Activated CD8-positive, alpha-beta T cell treated with anti-CD3 and anti-CD28 coated beads for 36 hours (primary cell): ENCODE measurements at regions of chr10 and their contacts with region 1.

Region 1: DNA sequence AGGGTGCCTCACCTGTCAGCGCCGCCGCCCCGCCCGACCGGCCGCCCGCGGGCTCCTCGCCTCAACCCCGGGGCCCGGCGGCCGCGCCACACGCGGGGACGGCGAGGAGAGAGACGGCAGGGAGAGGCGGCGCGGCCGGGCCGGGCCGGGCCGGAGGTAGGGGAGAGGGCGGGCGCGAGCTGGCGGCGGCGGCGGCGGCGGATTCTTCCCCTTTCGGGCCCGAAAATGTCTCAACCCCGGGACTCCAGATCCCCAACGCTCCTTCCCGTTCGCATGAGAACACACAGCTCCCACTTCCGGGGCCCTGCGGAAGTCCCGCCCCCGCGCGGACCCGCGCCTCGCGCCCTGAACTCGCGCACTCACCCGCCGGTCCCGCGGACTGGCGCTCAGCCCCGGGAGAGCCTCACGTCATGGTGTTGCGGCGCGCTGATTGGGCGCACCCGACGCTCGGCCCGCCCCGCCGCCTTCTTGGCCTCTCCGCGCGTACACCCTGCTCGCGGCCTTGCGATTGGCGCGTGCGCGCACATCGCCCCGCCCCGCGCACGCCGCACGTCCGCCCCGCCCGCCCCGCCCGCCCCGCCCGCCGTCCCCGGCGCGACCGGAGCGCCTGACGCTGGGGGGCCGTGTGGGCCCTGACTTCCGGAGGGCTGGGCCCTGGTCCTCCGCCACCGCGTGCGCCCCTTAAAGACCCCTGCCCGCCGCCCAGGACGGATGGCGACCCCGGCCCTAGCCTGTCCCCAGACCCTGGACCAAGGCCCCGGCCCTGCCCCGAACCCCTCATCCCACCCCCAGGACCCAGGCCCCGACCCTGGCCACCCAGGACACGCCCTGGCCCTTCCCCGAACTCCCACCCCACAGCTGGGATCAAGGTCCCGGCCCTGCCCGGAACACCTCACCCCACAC is at the start of gene LARP4B:
- DNase-seq: peak; percentile 96
- ATAC-seq: peak; percentile 99
- H3K4me3 Mint-ChIP-seq: peak within 1 kb of the TSS; percentile 91
- H3K27ac Mint-ChIP-seq: peak within 1 kb of the TSS; percentile 93
- H3K4me1 Mint-ChIP-seq: peaks cover 32% of the 10 kb centered on the region
- H3K27me3 Mint-ChIP-seq: no peaks in the 10 kb centered on the region
- CTCF ChIP-seq: no peak
- total RNA-seq, gene LARP4B: 101 to 104 TPM

Region 2: GRCh38 chr10:659688-660141 is 272.0 kb before region 1 on chr10:
- CTCF ChIA-PET with region 1: no interaction called
- POLR2A ChIA-PET with region 1: no interaction called
- intact Hi-C with region 1: no loop called
- DNase-seq: no peak
- ATAC-seq: no peak
- H3K4me3 Mint-ChIP-seq: no peak overlapping the region
- H3K27ac Mint-ChIP-seq: no peak overlapping the region
- H3K4me1 Mint-ChIP-seq: peaks cover 3% of the 10 kb centered on the region
- H3K27me3 Mint-ChIP-seq: peaks cover 4% of the 10 kb centered on the region
- CTCF ChIP-seq: no peak

Region 3: DNA sequence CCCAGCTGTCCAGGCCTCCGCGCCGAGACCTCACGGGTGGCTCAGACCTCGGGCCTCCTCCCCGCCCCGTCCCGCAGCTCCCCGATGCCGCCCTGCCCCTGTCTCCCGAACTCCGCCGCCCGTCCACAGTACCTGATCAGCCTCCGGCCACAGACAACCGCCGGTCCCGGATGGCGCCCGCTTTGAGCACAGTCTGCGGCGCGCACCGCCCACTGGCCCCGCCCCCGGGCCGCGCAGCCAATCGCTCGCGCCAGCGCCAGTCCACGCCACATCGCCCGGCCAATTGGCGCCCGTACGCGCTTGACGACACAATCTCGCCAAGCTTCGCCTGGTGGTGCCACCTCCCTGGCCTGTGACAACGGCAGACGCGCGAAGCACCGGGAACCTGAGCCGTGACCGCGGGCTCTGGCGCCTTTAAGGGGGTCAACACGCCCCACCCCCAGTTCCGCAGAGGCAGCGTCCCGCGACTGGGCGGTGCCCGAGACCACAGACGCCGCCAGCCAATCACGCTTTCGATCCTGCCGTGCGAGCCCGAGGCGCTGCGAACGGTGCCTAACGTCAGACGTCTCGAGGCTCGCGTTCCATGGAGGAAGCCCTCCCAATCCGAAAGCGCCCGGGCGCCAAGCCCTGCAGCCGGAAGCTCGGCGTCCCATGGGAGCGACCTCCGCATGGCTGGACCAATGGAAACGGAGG is 117.2 kb after region 1 on chr10 and contains the start of gene IDI1:
- CTCF ChIA-PET with region 1: interaction called, 3 read pairs
- POLR2A ChIA-PET with region 1: interaction called, 7 read pairs
- intact Hi-C with region 1: loop called (anchors 5 kb)
- DNase-seq: peak; percentile 98
- ATAC-seq: peak; percentile 87
- H3K4me3 Mint-ChIP-seq: peak within 1 kb of the TSS; percentile 98
- H3K27ac Mint-ChIP-seq: peak within 1 kb of the TSS; percentile 96
- H3K4me1 Mint-ChIP-seq: peaks cover 64% of the 10 kb centered on the region
- H3K27me3 Mint-ChIP-seq: no peaks in the 10 kb centered on the region
- CTCF ChIP-seq: no peak
- total RNA-seq, gene IDI1: 67.7 to 69.5 TPM

Region 4: DNA sequence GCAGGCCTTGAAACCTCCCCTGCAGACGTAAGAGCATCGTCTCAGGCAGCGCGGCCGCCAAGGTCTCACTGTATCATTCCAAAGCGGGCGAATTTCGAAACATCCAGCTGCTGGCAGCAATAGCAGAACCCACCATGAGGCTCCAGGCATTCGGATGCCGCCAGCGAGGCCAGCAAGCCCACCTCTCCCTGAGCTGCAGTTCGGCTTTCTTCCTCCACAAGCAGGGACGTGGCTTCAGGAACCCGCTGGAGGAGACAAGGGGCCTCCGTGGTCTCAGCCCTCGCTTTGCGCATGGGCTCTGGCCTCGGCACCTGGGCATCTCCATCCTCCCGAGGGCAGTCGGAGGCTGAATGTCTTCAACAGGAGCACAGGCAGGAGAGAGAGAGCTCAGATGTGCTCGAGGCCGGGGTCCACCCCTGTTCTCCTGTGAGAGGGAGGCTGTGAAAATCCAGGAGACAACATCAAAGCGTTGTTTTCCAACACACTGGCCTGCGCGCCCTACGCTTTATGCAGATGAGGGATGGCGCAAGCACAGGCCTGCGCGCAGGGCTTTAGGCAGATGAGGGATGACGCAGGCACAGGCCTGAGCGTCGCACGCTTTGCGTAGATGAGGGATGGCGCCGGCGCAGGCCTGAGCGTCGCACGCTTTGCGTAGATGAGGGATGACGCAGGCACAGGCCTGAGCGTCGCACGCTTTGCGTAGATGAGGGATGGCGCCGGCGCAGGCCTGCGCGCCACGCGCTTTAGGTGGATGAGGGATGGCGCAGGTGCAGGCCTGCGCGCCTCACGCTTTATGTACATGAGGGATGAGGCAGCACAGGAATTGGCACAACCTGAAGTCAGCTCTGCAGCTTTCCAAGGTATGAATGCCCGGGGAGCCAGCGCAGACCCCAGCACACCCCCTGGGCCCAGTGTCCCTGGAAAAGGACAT is 227.7 kb after region 1 on chr10:
- CTCF ChIA-PET with region 1: no interaction called
- POLR2A ChIA-PET with region 1: no interaction called
- intact Hi-C with region 1: no loop called
- DNase-seq: no peak
- ATAC-seq: peak; percentile 60
- H3K4me3 Mint-ChIP-seq: peak overlapping the region; percentile 45
- H3K27ac Mint-ChIP-seq: no peak overlapping the region
- H3K4me1 Mint-ChIP-seq: no peaks in the 10 kb centered on the region
- H3K27me3 Mint-ChIP-seq: peaks cover 1% of the 10 kb centered on the region
- CTCF ChIP-seq: no peak